Calu3 (cell line): ENCODE measurements at regions of chr16 and their contacts with region 1.

Region 1: DNA sequence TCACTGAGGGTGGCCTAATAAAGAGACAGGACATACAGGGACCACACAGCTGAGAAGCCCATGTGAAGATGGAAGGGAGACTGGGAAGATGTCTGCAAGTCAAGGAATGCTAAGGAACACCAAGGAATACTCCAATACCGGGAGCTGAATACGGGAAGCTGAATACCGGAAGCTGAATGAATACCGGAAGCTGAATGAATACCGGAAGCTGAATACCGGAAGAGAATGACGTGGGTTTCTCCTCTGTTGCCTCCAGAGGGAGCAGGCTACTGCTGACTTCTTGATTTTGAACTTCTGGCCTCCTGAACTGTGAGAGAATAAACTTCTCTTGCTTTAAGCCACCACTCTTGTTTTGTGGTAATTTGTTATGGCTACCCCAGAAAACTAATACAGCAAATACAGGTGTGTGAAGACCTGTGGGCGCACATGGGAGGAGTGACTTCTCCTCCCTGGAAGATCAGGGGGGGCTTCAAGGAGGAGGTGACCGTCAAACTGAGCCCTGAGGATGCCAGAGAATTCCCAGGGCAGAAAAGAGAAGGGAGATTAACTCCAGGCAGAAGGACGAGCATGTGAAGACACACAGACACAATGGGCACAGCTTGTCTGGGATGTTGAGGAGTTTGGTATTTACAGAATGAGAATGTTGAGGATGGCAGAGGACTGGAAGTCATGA is 259.9 kb downstream of the IRF8 start:
- DNase-seq: no peak
- H3K4me3 Mint-ChIP-seq: no peak overlapping the region
- H3K27ac Mint-ChIP-seq: no peak overlapping the region
- H3K4me1 Mint-ChIP-seq: no peaks in the 10 kb centered on the region
- H3K27me3 Mint-ChIP-seq: peaks cover 65% of the 10 kb centered on the region
- CTCF ChIP-seq: no peak

Region 2: GRCh38 chr16:86072328-86073102 is 86.3 kb before region 1 on chr16:
- CTCF ChIA-PET with region 1: interaction called, 11 read pairs
- intact Hi-C with region 1: no loop called
- DNase-seq: peak; percentile 73
- H3K4me3 Mint-ChIP-seq: no peak overlapping the region
- H3K27ac Mint-ChIP-seq: no peak overlapping the region
- H3K4me1 Mint-ChIP-seq: no peaks in the 10 kb centered on the region
- H3K27me3 Mint-ChIP-seq: peaks cover 97% of the 10 kb centered on the region
- CTCF ChIP-seq: peak; percentile 71

Region 3: GRCh38 chr16:86300746-86301481 is 142.1 kb after region 1 on chr16:
- CTCF ChIA-PET with region 1: no interaction called
- intact Hi-C with region 1: no loop called
- DNase-seq: no peak
- H3K4me3 Mint-ChIP-seq: no peak overlapping the region
- H3K27ac Mint-ChIP-seq: no peak overlapping the region
- H3K4me1 Mint-ChIP-seq: no peaks in the 10 kb centered on the region
- H3K27me3 Mint-ChIP-seq: peaks cover 100% of the 10 kb centered on the region
- CTCF ChIP-seq: no peak